ENCODE measurements at regions of chr1 and their contacts with region 1.

Region 1: GRCh38 chr1:77143529-77144121 is 75.6 kb downstream of the PIGK start:
- DNase-seq: peak in 1 of 4 experiments; percentile 9
- ATAC-seq: no peak
- H3K4me3 ChIP-seq: no peak overlapping the region
- H3K27ac ChIP-seq: no peak overlapping the region
- H3K4me1 ChIP-seq: no peaks in the 10 kb centered on the region
- H3K27me3 ChIP-seq: no peaks in the 10 kb centered on the region
- CTCF ChIP-seq: peak in 1 of 3 experiments; percentile 49; a peak in 2 of 6 replicates
- EP300 ChIP-seq: no peak
- POLR2A ChIP-seq: no peak
- RAD21 ChIP-seq: peak; percentile 14; a peak in 1 of 4 replicates

Region 2: DNA sequence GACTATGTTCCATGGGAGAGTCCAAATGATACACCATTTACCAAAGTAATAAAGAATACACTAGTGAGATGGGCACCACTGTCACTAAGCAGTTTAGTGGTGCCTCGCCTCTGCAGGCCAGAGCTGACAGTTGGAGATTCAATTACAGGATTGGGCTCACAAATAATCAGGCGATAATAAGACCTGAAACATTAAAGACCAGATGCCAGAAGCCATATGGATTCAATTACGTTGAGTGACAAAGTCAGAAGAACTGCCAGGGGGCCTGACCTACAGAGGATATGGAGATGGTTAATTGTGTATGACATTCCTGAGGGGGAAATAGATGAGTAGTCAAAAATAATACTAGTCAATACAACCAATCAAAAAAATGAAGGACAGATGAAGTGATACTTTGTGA is 341.5 kb before region 1 on chr1:
- CTCF ChIA-PET with region 1: no interaction called
- POLR2A ChIA-PET with region 1: no interaction called
- in situ Hi-C with region 1: no loop called
- intact Hi-C with region 1: no loop called
- DNase-seq: no peak
- ATAC-seq: no peak
- H3K4me3 ChIP-seq: no peak overlapping the region
- H3K27ac ChIP-seq: no peak overlapping the region
- H3K4me1 ChIP-seq: no peaks in the 10 kb centered on the region
- H3K27me3 ChIP-seq: no peaks in the 10 kb centered on the region
- CTCF ChIP-seq: no peak
- EP300 ChIP-seq: no peak
- POLR2A ChIP-seq: no peak
- RAD21 ChIP-seq: no peak

Region 3: DNA sequence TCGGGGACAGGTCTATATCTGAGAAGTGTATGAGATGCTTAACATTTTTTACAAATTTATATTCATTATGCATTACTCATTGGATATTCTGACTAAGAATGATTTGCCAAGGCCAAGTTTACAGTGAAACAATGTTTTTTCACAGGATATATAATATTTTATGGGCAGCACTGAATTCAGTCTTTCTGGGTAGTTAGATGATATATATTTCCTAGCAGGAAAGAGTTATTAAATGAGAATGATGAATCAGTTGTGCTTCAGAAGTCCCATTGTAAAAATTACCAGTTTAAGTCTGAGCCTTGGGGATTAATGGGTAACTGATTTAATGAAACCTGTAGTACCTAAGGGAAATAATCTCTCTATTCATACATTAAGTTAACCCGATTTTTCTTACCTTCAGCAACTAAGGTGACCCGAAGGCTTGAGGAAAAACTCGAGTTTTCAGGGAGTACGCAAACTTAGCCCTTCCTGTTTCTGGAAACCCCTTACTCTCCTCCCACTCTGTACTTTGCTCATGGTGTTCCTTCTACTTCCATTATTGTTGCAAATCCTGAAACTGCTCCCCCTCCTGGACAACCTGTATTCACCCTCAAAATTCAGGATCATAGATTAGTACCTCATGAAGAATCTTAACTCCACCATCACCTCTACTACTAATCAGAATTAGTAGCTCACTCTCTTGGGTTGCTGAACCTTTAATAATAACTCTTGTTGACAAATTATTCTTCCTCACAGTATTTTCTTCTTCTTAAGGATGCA is 273.2 kb after region 1 on chr1:
- CTCF ChIA-PET with region 1: interaction called, 4 read pairs
- POLR2A ChIA-PET with region 1: interaction called, 3 read pairs
- in situ Hi-C with region 1: no loop called
- intact Hi-C with region 1: loop called (anchors 5 kb)
- DNase-seq: peak; percentile 15 to 37 (median 19)
- ATAC-seq: peak; percentile 69; the same call in 2 of the 3 replicates
- H3K4me3 ChIP-seq: no peak overlapping the region
- H3K27ac ChIP-seq: no peak overlapping the region
- H3K4me1 ChIP-seq: no peaks in the 10 kb centered on the region
- H3K27me3 ChIP-seq: 0 out of 5 replicates have a peak, but pooled peaks cover 0 to 2% of the 10 kb centered on the region in 2 experiments
- CTCF ChIP-seq: peak; percentile 26 to 53 (median 48); a peak in 5 of 6 replicates
- EP300 ChIP-seq: no peak
- POLR2A ChIP-seq: no peak
- RAD21 ChIP-seq: peak in 1 of 2 experiments; percentile 47; a peak in 1 of 4 replicates

Region 4: DNA sequence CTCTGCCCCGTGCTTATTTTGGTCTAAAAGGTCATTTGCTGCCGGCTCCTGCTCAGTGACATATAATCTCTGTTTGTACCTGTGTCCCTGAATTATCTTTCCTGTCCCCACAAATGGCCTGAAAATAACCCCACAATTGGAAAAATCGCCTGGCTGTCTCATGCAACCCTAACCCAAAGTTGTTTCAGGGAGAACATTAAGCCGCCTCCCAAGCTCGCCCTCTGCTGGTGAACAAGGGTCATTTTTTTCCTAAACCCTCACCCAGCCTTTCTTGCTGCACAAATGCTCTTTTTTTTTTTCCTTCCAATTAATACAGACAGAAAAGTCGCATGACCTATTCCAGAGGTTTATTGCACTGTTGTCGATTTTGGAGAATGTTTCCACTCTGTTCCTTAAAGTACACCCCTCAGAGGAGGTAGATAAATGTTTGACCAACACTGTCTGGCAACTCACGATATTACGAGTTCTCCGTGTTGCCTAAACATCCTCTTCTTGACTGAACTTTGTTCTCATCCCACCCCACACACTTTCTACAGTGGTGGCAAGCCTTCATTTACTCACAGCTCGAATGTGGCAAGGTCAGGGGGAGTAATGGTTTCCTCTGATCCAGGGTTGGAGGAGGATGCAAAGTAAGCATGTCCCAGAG is 390.2 kb after region 1 on chr1:
- CTCF ChIA-PET with region 1: interaction called, 3 read pairs
- POLR2A ChIA-PET with region 1: no interaction called
- in situ Hi-C with region 1: no loop called
- intact Hi-C with region 1: loop called (anchors 1 kb)
- DNase-seq: peak; percentile 68 to 77 (median 73)
- ATAC-seq: peak; percentile 86
- H3K4me3 ChIP-seq: no peak overlapping the region
- H3K27ac ChIP-seq: no peak overlapping the region
- H3K4me1 ChIP-seq: no peaks in the 10 kb centered on the region; a peak in 1 of 5 replicates
- H3K27me3 ChIP-seq: peaks cover 0 to 11% of the 10 kb centered on the region in 2 experiments; a peak in 2 of 5 replicates
- CTCF ChIP-seq: peak; percentile 73 to 80 (median 76)
- EP300 ChIP-seq: no peak
- POLR2A ChIP-seq: no peak
- RAD21 ChIP-seq: peak; percentile 36 to 46; a peak in 3 of 4 replicates

Measured in K562 (cell line).